ENCODE measurements at regions of chr1 and their contacts with region 1.

Region 1: DNA sequence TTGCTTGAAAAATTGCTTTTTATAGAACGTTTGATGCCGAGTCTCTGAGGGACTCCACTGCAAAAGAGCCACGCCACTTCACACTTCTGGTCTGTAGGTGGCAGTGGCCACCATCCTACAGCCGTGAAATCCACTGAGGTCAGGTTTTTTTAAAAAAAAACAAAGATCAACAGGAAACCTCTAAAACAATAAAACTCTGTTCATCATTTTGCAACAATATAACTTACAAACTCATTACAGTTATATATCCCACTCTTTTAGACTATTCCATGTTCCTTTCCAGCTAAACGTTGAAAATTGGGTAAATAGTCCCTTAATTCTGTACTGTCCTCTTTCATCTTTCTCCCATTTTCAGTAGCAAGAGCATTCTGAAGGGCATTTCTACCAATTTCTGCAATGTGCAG is 64.6 kb upstream of the FMN2 start:
- DNase-seq: no peak
- H3K4me3 ChIP-seq: no peak overlapping the region
- H3K27ac ChIP-seq: no peak overlapping the region
- H3K4me1 ChIP-seq: no peaks in the 10 kb centered on the region
- H3K27me3 ChIP-seq: no peaks in the 10 kb centered on the region
- CTCF ChIP-seq: peak in 2 of 4 experiments; percentile 29 to 47
- POLR2A ChIP-seq: no peak

Region 2: GRCh38 chr1:239976130-239976968 is 50.7 kb before region 1 on chr1:
- intact Hi-C with region 1: no loop called
- DNase-seq: peak; percentile 22
- H3K4me3 ChIP-seq: no peak overlapping the region
- H3K27ac ChIP-seq: no peak overlapping the region
- H3K4me1 ChIP-seq: no peaks in the 10 kb centered on the region
- H3K27me3 ChIP-seq: no peaks in the 10 kb centered on the region
- CTCF ChIP-seq: peak; percentile 65 to 94 (median 76)
- POLR2A ChIP-seq: no peak

Region 3: DNA sequence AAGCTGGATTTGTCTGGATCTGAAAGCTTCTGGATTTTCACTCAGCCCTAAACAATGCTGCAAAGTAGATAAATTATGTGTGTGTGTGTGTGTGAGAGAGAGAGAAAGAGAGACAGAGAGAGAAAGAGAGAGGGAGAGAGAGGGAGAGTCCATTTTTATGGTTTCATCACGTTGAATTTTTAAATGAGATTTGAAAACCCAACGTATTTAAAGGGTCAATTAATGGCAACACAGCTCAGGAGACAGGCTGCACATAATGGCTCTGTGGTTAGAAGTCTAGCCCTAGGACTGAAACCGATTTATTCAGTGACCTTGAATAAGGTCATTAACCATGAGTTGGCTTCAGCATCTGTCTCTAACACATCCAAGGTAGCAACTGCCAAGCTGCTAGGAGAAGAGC is 29.3 kb after region 1 on chr1:
- intact Hi-C with region 1: no loop called
- DNase-seq: no peak
- H3K4me3 ChIP-seq: no peak overlapping the region
- H3K27ac ChIP-seq: no peak overlapping the region
- H3K4me1 ChIP-seq: no peaks in the 10 kb centered on the region
- H3K27me3 ChIP-seq: no peaks in the 10 kb centered on the region
- CTCF ChIP-seq: no peak
- POLR2A ChIP-seq: no peak

Region 4: GRCh38 chr1:240149484-240150094 is 122.5 kb after region 1 on chr1:
- intact Hi-C with region 1: loop called (anchors 5 kb)
- DNase-seq: no peak
- H3K4me3 ChIP-seq: no peak overlapping the region
- H3K27ac ChIP-seq: no peak overlapping the region
- H3K4me1 ChIP-seq: no peaks in the 10 kb centered on the region
- H3K27me3 ChIP-seq: no peaks in the 10 kb centered on the region
- CTCF ChIP-seq: peak; percentile 36 to 48 (median 44)
- POLR2A ChIP-seq: no peak

Region 5: GRCh38 chr1:240189386-240189989 is 162.4 kb after region 1 on chr1:
- intact Hi-C with region 1: loop called (anchors 5 kb)
- DNase-seq: no peak
- H3K4me3 ChIP-seq: no peak overlapping the region
- H3K27ac ChIP-seq: no peak overlapping the region
- H3K4me1 ChIP-seq: no peaks in the 10 kb centered on the region
- H3K27me3 ChIP-seq: peaks cover 2% of the 10 kb centered on the region
- CTCF ChIP-seq: peak in 2 of 4 experiments; percentile 30 to 58
- POLR2A ChIP-seq: no peak

Region 6: DNA sequence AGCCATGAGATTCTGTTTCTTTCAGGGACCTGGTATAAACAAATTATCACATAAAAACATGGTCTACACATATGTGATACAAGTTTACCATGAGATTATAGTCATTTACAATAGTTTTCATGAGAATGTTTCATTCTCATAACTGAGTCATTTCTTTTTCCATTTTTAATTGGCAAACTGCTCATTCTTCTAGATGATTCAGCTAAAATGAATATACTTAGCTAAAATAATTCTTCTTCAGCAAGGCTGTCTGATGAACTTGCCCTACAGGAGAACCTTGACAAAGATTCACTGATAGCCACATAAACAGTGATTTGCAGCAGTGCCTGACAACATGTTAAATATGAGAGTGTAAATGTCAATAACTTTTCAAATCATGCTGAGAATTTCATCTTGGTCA is 317.9 kb after region 1 on chr1:
- intact Hi-C with region 1: no loop called
- DNase-seq: no peak
- H3K4me3 ChIP-seq: no peak overlapping the region
- H3K27ac ChIP-seq: no peak overlapping the region
- H3K4me1 ChIP-seq: no peaks in the 10 kb centered on the region
- H3K27me3 ChIP-seq: no peaks in the 10 kb centered on the region
- CTCF ChIP-seq: no peak
- POLR2A ChIP-seq: no peak

Region 7: DNA sequence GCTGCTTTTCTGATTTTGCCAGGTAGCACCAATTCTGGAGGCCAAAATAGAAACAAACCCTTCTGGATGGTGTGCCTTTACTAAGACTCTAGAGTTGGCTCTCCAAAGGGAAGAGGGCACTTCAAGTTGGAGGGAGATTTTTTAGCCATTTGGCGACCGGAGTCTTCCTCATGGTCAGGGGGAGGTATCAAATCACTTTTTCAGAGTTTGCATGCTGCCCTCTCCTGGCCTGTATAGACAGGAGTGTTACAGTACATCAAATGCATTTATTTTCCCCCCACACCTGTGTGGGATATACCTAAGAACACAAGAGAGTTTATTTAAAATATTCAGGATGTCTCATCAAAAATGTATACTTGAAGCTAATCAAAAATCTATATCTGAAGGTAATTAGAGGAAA is 581.6 kb after region 1 on chr1:
- intact Hi-C with region 1: loop called (anchors 10 kb)
- DNase-seq: no peak
- H3K4me3 ChIP-seq: no peak overlapping the region
- H3K27ac ChIP-seq: no peak overlapping the region
- H3K4me1 ChIP-seq: no peaks in the 10 kb centered on the region
- H3K27me3 ChIP-seq: no peaks in the 10 kb centered on the region
- CTCF ChIP-seq: peak in 2 of 4 experiments; percentile 24 to 49
- POLR2A ChIP-seq: no peak

Region 8: GRCh38 chr1:240691521-240692338 is 664.7 kb after region 1 on chr1:
- intact Hi-C with region 1: loop called (anchors 5 kb)
- DNase-seq: no peak
- H3K4me3 ChIP-seq: no peak overlapping the region
- H3K27ac ChIP-seq: no peak overlapping the region
- H3K4me1 ChIP-seq: no peaks in the 10 kb centered on the region
- H3K27me3 ChIP-seq: no peaks in the 10 kb centered on the region
- CTCF ChIP-seq: peak in 3 of 4 experiments; percentile 35 to 70 (median 52)
- POLR2A ChIP-seq: no peak

Measured in prostate gland (tissue), 2 donors.